ENCODE measurements at regions of chr11 and their contacts with region 1.

Region 1: DNA sequence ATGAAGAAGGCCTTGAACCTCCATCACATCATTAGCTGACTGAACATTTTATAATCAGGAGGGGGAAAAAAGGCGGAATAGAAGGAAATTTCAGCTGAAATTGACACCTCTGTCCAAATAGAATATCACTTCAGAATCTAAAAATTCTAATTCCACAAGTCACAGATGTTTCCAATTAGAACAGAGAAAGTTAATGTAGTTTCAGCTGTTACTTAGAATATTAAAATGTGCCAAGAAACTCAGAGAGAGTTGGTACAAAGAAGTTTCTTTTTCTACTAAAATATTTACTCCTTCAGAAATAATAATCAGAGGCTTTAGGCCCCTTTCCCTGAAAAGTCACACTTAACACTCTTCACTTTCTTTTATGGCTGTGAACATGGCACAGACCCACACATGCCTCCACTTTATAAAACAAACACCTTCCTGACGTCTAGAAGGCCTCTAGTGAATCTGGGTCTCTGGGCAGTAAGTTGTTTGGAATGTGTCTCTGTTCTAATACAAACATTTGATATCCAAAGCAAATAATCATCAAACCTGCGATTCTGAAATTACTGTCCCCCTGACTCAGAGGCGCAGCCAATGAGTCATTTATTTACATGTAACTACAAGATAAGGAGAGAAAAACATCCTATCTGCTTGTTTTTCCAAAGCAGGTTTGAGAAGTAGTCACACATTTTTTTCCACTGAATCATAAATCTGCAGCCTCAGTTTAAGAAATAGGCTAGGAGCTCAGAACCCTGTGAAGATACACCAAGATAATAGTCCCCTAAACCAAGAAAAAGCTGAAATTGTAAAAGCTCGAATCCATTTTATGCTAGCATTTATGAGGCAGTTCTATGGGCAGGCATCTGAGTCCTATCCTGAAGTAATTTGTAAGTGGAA is 148.4 kb downstream of the ME3 start:
- DNase-seq: peak; percentile 91
- ATAC-seq: peak; percentile 87
- H3K4me3 ChIP-seq: peak overlapping the region; percentile 5 to 36; a peak in 3 of 4 replicates
- H3K27ac ChIP-seq: peak overlapping the region; percentile 80
- H3K4me1 ChIP-seq: peaks cover 36 to 42% of the 10 kb centered on the region in 2 experiments
- H3K27me3 ChIP-seq: no peaks in the 10 kb centered on the region
- CTCF ChIP-seq: 0 out of 6 replicates have a peak, but pooled peaks of 1 of the 3 experiments have one; percentile 4
- POLR2A ChIP-seq: no peak
- RAD21 ChIP-seq: 0 out of 2 replicates have a peak, but pooled peaks have one; percentile 22

Region 2: DNA sequence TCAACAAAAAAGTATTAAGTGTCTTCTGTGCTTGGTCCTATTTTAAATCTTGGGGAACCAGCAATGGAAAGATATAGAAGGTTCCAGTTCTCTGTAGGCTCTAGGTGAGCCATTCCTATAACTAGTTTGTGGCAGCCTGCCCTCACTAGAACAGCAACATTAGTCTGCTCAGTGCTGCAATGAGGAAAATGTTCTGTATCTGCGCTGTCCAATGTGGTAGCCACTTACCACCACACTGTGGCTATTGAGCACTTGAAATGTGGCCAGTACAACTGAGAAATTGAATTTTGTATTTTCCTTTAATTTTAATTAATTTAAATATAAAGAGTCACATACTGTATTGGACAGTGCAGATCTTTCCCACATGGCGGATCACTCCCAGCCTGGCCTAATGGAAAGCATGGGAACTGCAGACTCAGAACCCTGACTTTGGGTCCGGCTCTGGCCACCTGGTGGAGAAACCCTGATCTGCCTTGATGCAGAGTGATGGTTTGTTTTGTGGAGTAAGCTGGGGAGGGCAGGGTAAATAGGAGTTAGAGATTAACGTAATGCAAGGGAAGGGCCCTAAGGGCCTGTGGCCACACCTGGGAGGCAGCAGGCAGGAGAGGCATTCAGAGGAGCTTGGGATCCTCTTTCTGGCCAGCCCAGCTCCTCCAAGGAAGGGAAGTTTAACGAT is 47.4 kb after region 1 on chr11:
- CTCF ChIA-PET with region 1: no interaction called
- POLR2A ChIA-PET with region 1: no interaction called
- RAD21 ChIA-PET with region 1: no interaction called
- intact Hi-C with region 1: loop called (anchors 10 kb)
- DNase-seq: peak; percentile 80
- ATAC-seq: peak; percentile 98
- H3K4me3 ChIP-seq: no peak overlapping the region
- H3K27ac ChIP-seq: no peak overlapping the region
- H3K4me1 ChIP-seq: peaks cover 6 to 25% of the 10 kb centered on the region in 2 experiments; a peak in 2 of 4 replicates
- H3K27me3 ChIP-seq: no peaks in the 10 kb centered on the region; the same call in 1 of the 2 replicates
- CTCF ChIP-seq: peak; percentile 77 to 96 (median 93)
- POLR2A ChIP-seq: no peak
- RAD21 ChIP-seq: peak; percentile 79

Region 3: DNA sequence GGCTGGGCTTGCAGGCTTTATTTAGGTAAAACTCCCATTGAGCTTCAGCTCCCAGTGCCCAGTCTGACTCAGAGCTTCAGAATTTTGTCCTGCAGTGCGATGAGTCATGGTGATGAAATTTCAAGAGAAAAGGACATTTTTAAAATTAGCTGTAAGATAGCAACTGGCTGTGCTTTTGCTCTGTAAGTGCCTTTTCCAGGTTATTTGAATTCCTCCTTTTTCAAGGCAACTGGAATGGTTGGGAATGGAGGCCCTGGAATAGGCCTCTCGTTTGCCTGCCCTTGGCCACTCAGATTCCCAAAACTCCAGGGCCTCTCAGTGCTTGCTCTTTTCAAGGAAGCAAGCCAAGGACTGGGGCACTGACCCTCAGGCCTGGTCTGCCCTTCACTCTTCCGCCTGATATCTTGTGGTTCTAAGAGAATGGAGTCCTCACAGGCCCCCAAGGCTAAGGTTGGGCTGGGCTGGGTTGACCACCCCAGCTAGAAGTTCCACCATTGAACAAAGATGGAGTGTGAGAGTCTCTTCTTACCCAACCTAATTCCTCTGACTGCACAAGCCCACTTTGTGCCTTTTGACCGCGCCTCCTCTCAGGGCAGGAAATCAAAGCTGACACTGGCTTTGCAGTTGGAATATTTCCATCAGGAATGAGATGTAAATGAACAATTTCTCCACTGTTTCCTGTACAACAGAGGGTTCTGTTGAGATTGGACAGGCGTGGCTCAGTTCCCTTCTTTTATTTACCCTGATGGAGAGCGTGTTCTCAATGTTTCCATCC is 216.9 kb after region 1 on chr11:
- CTCF ChIA-PET with region 1: no interaction called
- POLR2A ChIA-PET with region 1: no interaction called
- RAD21 ChIA-PET with region 1: no interaction called
- intact Hi-C with region 1: loop called (anchors 5 kb)
- DNase-seq: peak; percentile 89
- ATAC-seq: peak; percentile 56
- H3K4me3 ChIP-seq: peak overlapping the region in 1 of 2 experiments; percentile 37; a peak in 2 of 4 replicates
- H3K27ac ChIP-seq: peak overlapping the region; percentile 87
- H3K4me1 ChIP-seq: peaks cover 60 to 77% of the 10 kb centered on the region in 2 experiments
- H3K27me3 ChIP-seq: no peaks in the 10 kb centered on the region
- CTCF ChIP-seq: no peak
- POLR2A ChIP-seq: no peak
- RAD21 ChIP-seq: no peak